ENCODE measurements at regions of chr19 and their contacts with region 1.

Region 1: DNA sequence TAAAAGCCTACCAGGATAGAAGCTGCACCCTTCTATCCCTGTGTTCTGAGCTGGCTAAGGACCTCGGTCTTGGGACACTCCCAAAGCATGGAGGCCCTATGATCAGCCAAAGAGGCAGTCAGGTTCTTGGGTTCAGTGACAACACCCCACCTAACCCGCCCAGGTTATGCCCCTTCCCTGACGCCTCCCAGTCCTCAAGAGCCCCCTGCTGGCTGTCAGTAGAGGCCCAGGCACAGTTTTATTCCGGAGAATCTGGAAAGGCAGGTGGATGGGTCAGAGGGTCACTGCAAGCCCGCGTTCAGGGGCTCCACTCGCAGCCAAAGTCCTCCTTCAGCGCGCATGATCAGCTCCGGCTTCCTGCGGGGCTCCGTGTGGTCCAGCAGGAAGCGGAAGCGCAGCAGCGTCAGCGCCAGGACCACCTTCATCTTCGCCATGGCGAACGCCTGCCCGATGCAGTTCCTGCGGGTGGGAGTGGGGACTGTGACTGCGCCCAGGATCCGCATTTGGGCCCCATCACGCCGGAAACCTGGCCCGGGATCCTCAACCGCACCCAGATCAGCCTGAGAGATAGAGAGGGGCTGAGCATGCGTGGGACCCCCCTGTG is 22.3 kb downstream of the OR10H3 start:
- DNase-seq: no peak

Region 2: DNA sequence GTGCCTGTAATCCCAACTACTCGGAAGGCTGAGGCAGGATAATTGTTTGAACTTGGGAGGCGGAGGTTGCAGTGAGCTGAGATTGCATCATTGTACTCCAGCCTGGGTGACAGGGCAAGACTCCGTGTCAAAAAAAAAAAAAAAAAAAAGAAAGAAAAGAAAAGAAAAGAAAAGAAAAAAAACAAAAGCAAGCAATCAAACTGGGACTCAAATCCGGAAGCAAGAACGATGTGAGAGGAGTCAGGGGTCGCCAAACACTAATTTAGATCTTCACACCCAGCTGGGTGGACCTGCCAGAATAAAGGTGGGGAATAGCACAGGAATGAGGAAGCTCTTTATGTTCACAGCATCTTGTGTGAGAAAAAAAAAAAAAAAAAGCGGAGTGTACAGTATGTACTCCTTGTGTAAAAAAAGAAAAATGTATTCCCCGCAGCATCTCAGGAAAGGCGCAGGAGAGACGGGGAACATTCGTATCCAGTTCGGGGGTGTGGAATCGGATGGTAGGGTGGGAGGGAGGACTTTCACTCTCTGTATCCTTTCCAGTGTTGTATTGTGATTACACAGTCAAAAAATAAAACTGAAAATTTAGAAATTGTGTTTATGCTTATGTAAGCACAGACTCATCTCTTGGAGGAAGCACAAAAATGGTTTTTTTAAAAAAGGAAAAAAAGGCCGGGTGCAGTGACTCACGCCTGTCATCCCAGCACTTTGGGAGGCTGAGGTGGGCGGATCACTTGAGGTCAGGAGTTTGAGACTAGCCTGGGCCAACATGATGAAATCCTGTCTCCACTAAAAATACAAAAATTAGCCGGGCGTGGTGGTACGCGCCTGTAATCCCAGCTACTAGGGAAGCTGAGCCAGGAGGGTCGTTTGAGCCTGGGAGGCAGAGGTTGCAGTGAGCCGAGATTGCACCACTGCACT is 1249.5 kb before region 1 on chr19:
- intact Hi-C with region 1: loop called in 1 of 2 experiments (anchors 5 kb)
- DNase-seq: peak; percentile 89

Region 3: DNA sequence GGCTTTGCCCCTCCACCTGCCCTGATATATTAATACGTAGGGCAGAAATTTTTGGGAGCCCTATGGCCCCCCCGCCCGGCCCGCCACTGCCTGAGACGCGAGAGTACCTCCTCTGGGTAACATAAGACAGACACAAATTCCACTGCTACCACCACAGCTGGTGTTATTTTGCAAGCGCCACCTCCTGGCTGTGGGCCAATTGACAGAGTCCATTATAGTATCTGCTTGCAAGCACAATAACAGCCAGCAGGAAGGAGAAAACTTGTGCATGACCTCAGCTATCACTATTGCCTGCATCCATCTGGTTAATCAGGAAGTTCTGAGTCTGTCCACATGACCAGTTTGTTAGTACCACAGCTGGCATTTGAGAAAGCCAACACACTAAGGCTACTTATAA is 57.5 kb before region 1 on chr19:
- intact Hi-C with region 1: no loop called
- DNase-seq: peak; percentile 93

Region 4: DNA sequence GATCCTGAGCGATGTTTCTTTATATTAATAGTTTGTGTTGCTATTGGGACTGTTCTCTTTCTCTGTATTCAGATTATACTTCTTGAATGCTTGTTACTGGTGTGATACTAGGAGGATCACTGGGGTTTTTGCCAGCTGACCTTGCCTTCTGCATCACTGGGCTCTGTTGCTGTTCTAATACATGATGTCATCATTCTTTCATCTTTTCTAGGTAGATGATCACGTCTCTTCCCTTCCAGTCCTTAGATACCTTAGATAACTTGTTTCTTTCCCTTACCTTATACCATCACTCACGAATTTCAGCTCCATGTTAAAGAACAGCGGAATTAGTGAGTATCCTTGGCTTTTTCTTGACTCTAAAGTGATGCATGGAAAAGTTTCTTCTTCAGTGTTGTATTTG is 22.3 kb before region 1 on chr19 and contains the start of gene OR10H3:
- intact Hi-C with region 1: no loop called
- DNase-seq: no peak
- total RNA-seq, gene OR10H3: not detected